ENCODE measurements at regions of chr2 and their contacts with region 1.

Region 1: GRCh38 chr2:26345545-26346453 is at the start of gene SELENOI:
- DNase-seq: peak; percentile 100
- ATAC-seq: peak; percentile 94
- H3K4me3 Mint-ChIP-seq: peak within 1 kb of the TSS; percentile 91
- H3K27ac Mint-ChIP-seq: peak within 1 kb of the TSS; percentile 98
- H3K4me1 Mint-ChIP-seq: peaks cover 36% of the 10 kb centered on the region
- H3K27me3 Mint-ChIP-seq: no peaks in the 10 kb centered on the region
- total RNA-seq, gene SELENOI: 26.5 to 42.3 TPM

Region 2: DNA sequence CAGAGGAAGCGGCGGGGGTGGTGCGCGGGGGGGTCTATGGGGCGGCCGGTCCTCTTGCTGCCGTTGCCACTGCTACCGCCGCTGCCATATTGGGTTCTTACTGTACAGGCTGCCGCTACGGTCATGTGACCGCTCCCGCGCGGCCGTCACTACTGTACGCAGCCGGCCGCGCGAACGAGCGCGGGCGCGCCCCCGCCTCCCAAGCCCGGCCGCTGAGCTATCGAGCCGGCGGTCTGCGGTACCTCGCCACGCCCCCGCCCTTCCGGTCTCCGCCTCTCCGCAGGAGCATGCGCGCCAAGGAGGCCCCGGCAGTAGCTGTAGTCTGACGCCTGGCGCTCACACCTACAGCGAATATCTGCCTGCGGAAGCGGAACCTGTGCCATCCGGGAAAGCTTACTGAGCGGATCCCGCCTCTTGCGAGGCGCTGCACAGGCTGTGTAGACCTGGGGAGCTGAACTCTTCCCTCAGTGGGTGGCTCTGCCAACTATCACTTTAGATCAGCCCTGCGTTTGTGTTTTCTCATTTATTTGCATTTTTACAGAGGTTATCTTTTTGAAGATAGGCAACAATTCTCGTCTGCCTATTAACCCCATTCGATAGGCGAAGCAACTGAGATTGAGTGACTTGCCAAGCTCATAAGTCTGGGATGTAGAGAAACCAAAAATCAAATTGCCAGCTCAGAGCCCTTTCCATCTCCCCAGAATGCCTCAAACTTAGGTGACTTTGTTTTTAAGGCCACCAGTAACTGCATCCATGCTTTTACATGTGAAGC is 467.3 kb before region 1 on chr2 and contains the start of gene ASXL2:
- CTCF ChIA-PET with region 1: no interaction called
- POLR2A ChIA-PET with region 1: interaction called, 4 read pairs
- intact Hi-C with region 1: loop called in 1 of 2 experiments (anchors 1 kb)
- DNase-seq: peak; percentile 99
- ATAC-seq: peak; percentile 87
- H3K4me3 Mint-ChIP-seq: peak within 1 kb of the TSS; percentile 91
- H3K27ac Mint-ChIP-seq: peak within 1 kb of the TSS; percentile 95
- H3K4me1 Mint-ChIP-seq: peaks cover 45% of the 10 kb centered on the region
- H3K27me3 Mint-ChIP-seq: no peaks in the 10 kb centered on the region
- total RNA-seq, gene ASXL2: 36.8 to 46.4 TPM

Region 3: DNA sequence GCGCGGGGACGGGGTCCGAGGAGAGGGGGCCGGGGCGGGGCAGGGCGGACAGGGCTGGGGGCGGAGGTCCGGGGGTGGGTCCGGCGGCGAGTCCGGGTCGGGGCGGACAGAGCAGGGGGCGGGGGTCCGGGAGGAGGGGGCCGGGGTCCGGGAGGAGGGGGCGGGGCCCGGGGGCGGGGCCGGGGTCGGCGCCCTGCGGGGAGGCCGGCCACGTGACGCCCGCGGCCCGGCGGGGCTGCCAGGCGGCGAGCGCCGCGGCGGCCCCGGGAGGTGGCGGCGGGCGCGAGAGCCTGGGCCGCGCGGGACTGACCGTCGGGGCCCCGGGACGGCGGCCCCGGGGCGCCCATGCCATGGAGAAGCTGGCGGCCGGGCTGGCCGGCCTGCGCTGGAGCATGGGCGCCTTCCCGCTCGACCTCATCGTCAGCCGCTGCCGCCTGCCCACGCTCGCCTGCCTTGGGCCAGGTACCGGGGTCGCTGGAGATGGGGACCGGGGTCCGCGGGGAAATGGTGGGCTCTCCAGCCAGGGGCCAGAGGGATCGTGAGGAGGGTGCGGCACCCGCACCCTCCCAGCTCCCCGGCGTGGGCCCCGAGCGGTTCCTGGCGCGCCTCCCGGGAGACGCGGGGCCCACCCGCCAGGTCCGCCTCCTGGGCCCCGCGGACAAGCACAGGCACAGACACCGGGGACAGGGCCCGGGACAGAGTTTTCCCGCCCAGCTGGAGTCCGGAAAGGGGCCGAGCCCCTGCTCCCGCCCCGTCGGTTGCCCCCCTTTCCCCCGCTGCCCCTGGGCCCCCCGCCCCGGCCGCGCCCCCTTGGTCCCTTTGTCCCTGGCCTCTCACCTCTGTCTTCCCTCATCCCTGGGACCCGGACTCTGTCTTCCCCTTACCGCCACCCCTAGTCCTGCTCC is 172.7 kb before region 1 on chr2 and contains the start of gene GAREM2:
- CTCF ChIA-PET with region 1: interaction called, 4 read pairs
- POLR2A ChIA-PET with region 1: no interaction called
- intact Hi-C with region 1: loop called in 1 of 2 experiments (anchors 5 kb)
- DNase-seq: no peak
- ATAC-seq: peak; percentile 14
- H3K4me3 Mint-ChIP-seq: peak within 1 kb of the TSS; percentile 67
- H3K27ac Mint-ChIP-seq: no peak within 1 kb of the TSS
- H3K4me1 Mint-ChIP-seq: peaks cover 5% of the 10 kb centered on the region
- H3K27me3 Mint-ChIP-seq: peaks cover 26% of the 10 kb centered on the region
- total RNA-seq, gene GAREM2: 3.2 to 5.7 TPM

Region 4: GRCh38 chr2:26330113-26330549 is 15.7 kb before region 1 on chr2:
- CTCF ChIA-PET with region 1: interaction called, 16 read pairs
- POLR2A ChIA-PET with region 1: no interaction called
- intact Hi-C with region 1: no loop called
- DNase-seq: peak; percentile 94
- ATAC-seq: peak; percentile 97
- H3K4me3 Mint-ChIP-seq: no peak overlapping the region
- H3K27ac Mint-ChIP-seq: no peak overlapping the region
- H3K4me1 Mint-ChIP-seq: peaks cover 9% of the 10 kb centered on the region
- H3K27me3 Mint-ChIP-seq: no peaks in the 10 kb centered on the region

Region 5: GRCh38 chr2:26785431-26786206 is 439.8 kb after region 1 on chr2 and contains the start of gene CENPA:
- CTCF ChIA-PET with region 1: no interaction called
- POLR2A ChIA-PET with region 1: interaction called, 3 read pairs
- intact Hi-C with region 1: loop called in 1 of 2 experiments (anchors 5 kb)
- DNase-seq: peak; percentile 97
- ATAC-seq: peak; percentile 100
- H3K4me3 Mint-ChIP-seq: peak within 1 kb of the TSS; percentile 80
- H3K27ac Mint-ChIP-seq: peak within 1 kb of the TSS; percentile 79
- H3K4me1 Mint-ChIP-seq: peaks cover 16% of the 10 kb centered on the region
- H3K27me3 Mint-ChIP-seq: peaks cover 7% of the 10 kb centered on the region
- total RNA-seq, gene CENPA: 37.0 to 38.0 TPM

Region 6: GRCh38 chr2:27356382-27357181 is 1010.8 kb after region 1 on chr2 and contains the start of gene GTF3C2:
- CTCF ChIA-PET with region 1: no interaction called
- POLR2A ChIA-PET with region 1: no interaction called
- intact Hi-C with region 1: loop called in 1 of 2 experiments (anchors 2 kb)
- DNase-seq: peak; percentile 96
- ATAC-seq: peak; percentile 82
- H3K4me3 Mint-ChIP-seq: peak within 1 kb of the TSS; percentile 98
- H3K27ac Mint-ChIP-seq: peak within 1 kb of the TSS; percentile 100
- H3K4me1 Mint-ChIP-seq: peaks cover 50% of the 10 kb centered on the region
- H3K27me3 Mint-ChIP-seq: no peaks in the 10 kb centered on the region
- total RNA-seq, gene GTF3C2: 60.3 to 70.2 TPM

Measured in activated CD4-positive, alpha-beta T cell treated with anti-CD3 and anti-CD28 coated beads for 36 hours (primary cell).